ENCODE measurements at regions of chr4 and their contacts with region 1.

Region 1: GRCh38 chr4:98617358-98618244 is 40.8 kb downstream of the TSPAN5 start:
- DNase-seq: peak in 3 of 5 donors; percentile 29 to 53 (median 40)
- H3K4me3 ChIP-seq: no peak overlapping the region
- H3K27ac ChIP-seq: peak overlapping the region in 1 of 2 donors; percentile 39
- H3K4me1 ChIP-seq: peaks cover 29% of the 10 kb centered on the region
- H3K27me3 ChIP-seq: no peaks in the 10 kb centered on the region
- CTCF ChIP-seq: no peak
- EP300 ChIP-seq: no peak
- POLR2A ChIP-seq: no peak

Region 2: GRCh38 chr4:98518559-98519267 is 98.9 kb before region 1 on chr4:
- intact Hi-C with region 1: loop called in 1 of 4 experiments (anchors 5 kb)
- DNase-seq: no peak
- H3K4me3 ChIP-seq: no peak overlapping the region
- H3K27ac ChIP-seq: peak overlapping the region; percentile 37 to 80
- H3K4me1 ChIP-seq: peaks cover 30% of the 10 kb centered on the region
- H3K27me3 ChIP-seq: no peaks in the 10 kb centered on the region
- CTCF ChIP-seq: no peak
- EP300 ChIP-seq: no peak
- POLR2A ChIP-seq: no peak

Region 3: DNA sequence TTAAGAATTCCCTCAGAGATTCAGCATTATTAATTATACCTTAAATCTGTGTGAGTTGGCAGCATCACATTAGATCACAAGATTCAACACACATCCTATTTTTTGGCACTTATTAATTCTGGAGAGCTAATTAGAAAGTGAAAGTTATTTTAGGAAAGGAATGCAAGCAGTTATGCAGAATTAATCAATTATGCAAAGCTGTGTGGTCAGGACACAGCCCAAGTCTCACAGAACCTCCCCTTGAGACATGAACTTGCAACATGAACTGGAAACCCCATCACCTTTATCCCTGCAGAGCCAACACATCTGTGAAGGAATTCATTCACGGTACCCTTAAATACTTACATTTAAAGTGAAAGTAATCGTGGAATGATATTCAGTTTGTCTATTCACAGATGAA is 39.6 kb before region 1 on chr4:
- intact Hi-C with region 1: no loop called
- DNase-seq: no peak
- H3K4me3 ChIP-seq: no peak overlapping the region
- H3K27ac ChIP-seq: peak overlapping the region in 1 of 2 donors; percentile 10
- H3K4me1 ChIP-seq: peaks cover 18% of the 10 kb centered on the region
- H3K27me3 ChIP-seq: no peaks in the 10 kb centered on the region
- CTCF ChIP-seq: no peak
- EP300 ChIP-seq: no peak
- POLR2A ChIP-seq: no peak